ENCODE measurements at regions of chr4 and their contacts with region 1.

Region 1: DNA sequence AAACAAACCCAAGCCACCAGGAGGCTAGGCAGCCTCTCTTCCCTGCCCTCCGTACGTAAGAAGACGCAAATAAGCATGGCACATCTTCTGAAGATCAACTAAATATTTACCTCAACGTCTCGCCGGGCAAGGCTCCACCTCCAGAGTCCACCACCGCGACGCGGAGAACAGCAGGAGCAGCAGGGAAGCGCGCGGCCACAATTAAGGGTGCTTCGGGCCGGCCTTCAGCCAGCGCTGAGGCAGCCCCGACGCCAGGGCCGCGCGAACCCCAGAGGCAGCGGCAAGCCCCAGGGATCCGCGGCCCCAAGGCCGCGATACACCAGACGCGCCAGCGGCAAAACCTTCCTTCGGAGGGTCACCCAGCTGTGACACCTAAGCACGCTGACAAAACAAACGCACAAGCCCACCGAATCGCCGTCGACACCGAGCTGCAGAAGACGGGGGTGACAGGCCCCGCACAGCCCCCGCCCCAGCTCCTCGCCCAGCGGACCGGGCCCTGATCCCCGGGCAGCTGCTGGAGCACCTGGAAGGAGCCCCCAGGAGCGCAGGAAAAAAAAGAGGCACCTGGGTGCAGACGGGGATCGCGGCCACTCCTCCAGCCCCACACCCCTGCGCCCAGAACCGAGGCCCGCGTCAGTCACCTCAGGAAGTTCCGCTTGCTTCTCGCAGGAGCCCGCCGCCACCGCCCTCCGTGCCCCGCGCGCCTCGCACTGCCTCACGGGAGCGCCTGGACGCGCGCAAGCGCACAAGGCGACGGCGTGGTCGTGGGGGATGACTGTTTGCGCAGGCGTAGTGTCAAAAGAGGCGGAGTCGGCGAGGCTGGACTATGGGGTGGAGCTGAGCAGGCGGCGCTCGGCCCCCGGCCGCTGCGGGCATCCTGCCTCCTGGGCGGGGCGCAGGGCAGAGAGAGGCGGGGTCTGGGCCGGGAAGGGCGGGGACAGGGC is at the starts of genes HAUS3 and POLN:
- DNase-seq: peak; percentile 100
- ATAC-seq: peak; percentile 97
- H3K4me3 ChIP-seq: peak within 1 kb of the TSS; percentile 66 to 88 (median 76)
- H3K4me3 Mint-ChIP-seq: peak within 1 kb of the TSS; percentile 95
- H3K27ac ChIP-seq: peak within 1 kb of the TSS; percentile 53 to 89
- H3K27ac Mint-ChIP-seq: peak within 1 kb of the TSS; percentile 95
- H3K4me1 ChIP-seq: peaks cover 34 to 45% of the 10 kb centered on the region in 2 donors
- H3K4me1 Mint-ChIP-seq: peaks cover 59% of the 10 kb centered on the region
- H3K27me3 ChIP-seq: no peaks in the 10 kb centered on the region
- H3K27me3 Mint-ChIP-seq: no peaks in the 10 kb centered on the region
- CTCF ChIP-seq: peak; percentile 23
- total RNA-seq, gene HAUS3: 24.2 and 26.5 TPM in 2 replicates
- total RNA-seq, gene POLN: 1.5 and 4.2 TPM in 2 replicates

Region 2: DNA sequence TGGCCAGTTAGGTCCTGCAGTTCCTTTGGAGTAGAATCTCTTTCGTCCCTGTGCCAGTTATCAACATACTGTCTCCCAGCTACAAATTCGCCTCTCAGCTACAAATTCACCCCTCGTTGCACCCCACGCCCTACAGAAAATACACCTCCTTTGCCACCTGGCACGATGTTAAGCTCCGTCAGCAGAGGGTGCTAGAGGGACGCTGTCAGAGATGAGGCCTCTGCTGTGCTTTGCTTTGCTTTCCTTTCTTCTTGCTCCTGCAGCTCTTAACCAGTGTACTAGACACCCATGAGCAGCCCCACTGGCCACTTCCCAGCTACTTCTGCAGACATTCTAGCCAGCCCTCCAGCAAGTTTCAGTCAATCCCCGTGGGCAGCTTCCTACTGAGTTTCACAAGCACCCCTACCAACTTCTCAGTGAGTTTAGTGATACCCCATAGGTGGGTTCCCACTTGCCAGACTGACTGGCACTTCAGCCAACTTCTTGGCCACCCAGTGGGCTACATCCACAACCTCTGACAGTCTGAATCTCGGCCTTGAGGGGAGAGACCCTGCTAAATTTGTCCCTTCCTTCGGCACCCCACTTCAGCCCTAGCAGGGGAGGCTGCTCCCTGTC is 21.6 kb before region 1 on chr4:
- CTCF ChIA-PET with region 1: interaction called, 51 read pairs
- POLR2A ChIA-PET with region 1: interaction called, 3 read pairs
- intact Hi-C with region 1: loop called (anchors 1 kb)
- DNase-seq: peak; percentile 82
- ATAC-seq: peak; percentile 90
- H3K4me3 ChIP-seq: no peak overlapping the region
- H3K4me3 Mint-ChIP-seq: no peak overlapping the region
- H3K27ac ChIP-seq: no peak overlapping the region
- H3K27ac Mint-ChIP-seq: peak overlapping the region; percentile 26
- H3K4me1 ChIP-seq: peaks cover 0 to 5% of the 10 kb centered on the region in 2 donors
- H3K4me1 Mint-ChIP-seq: peaks cover 4% of the 10 kb centered on the region
- H3K27me3 ChIP-seq: no peaks in the 10 kb centered on the region
- H3K27me3 Mint-ChIP-seq: no peaks in the 10 kb centered on the region
- CTCF ChIP-seq: peak; percentile 88

Region 3: DNA sequence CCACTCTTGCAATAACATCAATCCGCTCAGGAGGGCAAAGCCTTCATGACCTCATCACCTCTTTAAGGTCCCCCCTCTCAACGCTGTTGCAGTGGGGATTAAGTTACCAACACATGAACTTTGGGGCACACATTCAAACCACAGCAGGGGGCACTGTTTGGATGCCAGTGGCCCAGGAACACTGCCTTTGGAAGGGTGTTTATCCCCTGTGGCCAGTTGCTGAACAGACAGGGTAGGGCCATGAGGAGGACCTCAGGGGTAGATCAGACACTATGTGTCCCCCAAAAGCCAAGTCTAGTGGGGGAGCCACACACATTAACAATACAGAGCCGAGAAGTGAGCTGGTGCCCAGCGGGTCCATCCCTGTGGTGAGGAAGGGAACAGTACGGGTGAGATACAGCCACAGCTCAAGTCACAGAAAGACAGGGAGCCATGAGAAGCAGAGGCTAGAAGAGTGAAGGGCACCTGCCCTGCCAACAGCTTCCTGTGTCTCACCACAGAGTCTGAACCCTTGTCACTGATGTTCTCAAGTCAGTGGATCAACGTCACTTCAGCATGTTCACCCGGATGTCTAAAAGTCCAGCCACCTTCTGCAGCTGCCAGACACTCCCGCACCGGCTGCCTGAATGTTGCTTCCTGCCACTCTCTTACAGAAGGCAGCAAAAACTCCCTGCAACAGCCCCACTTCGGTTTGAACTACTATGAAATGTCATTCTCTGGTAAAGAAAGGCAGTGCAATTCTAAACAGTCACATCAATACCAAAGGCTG is 40.1 kb after region 1 on chr4:
- CTCF ChIA-PET with region 1: no interaction called
- POLR2A ChIA-PET with region 1: no interaction called
- intact Hi-C with region 1: loop called (anchors 1 kb)
- DNase-seq: peak; percentile 90
- ATAC-seq: peak; percentile 92
- H3K4me3 ChIP-seq: no peak overlapping the region
- H3K4me3 Mint-ChIP-seq: peak overlapping the region; percentile 87
- H3K27ac ChIP-seq: peak overlapping the region; percentile 54 to 83
- H3K27ac Mint-ChIP-seq: peak overlapping the region; percentile 99
- H3K4me1 ChIP-seq: peaks cover 18 to 21% of the 10 kb centered on the region in 2 donors
- H3K4me1 Mint-ChIP-seq: peaks cover 33% of the 10 kb centered on the region
- H3K27me3 ChIP-seq: no peaks in the 10 kb centered on the region
- H3K27me3 Mint-ChIP-seq: no peaks in the 10 kb centered on the region
- CTCF ChIP-seq: peak; percentile 76

Region 4: DNA sequence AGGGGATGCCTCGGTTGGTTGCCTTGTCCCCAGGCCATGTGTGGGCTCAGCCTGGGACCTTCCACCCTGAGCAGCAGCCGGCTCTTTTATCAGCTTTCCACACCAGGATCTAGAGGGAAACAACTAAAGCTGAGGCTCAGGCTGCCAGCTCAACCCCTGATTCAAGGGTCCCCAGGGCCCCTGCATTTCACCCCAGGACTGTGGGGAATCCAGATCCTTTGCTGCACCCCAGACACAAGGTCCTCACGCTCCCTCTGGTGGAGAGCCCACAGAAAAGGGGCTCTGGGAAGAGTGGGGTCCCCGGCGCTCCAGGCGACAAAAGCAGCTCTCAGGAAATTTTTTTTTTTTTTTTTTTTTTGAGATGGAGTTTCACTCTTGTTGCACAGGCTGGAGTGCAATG is 112.4 kb after region 1 on chr4:
- CTCF ChIA-PET with region 1: interaction called, 4 read pairs
- POLR2A ChIA-PET with region 1: no interaction called
- intact Hi-C with region 1: loop called (anchors 1 kb)
- DNase-seq: peak; percentile 32
- ATAC-seq: peak; percentile 37
- H3K4me3 ChIP-seq: no peak overlapping the region
- H3K4me3 Mint-ChIP-seq: no peak overlapping the region
- H3K27ac ChIP-seq: no peak overlapping the region
- H3K27ac Mint-ChIP-seq: peak overlapping the region; percentile 32
- H3K4me1 ChIP-seq: peaks cover 11 to 13% of the 10 kb centered on the region in 2 donors
- H3K4me1 Mint-ChIP-seq: peaks cover 15% of the 10 kb centered on the region
- H3K27me3 ChIP-seq: no peaks in the 10 kb centered on the region
- H3K27me3 Mint-ChIP-seq: no peaks in the 10 kb centered on the region
- CTCF ChIP-seq: peak; percentile 42

Region 5: GRCh38 chr4:2441393-2442174 is 199.9 kb after region 1 on chr4:
- CTCF ChIA-PET with region 1: interaction called, 8 read pairs
- POLR2A ChIA-PET with region 1: interaction called, 10 read pairs
- intact Hi-C with region 1: no loop called
- DNase-seq: peak; percentile 78
- ATAC-seq: peak; percentile 98
- H3K4me3 ChIP-seq: no peak overlapping the region
- H3K4me3 Mint-ChIP-seq: no peak overlapping the region
- H3K27ac ChIP-seq: no peak overlapping the region
- H3K27ac Mint-ChIP-seq: no peak overlapping the region
- H3K4me1 ChIP-seq: peaks cover 0 to 7% of the 10 kb centered on the region in 2 donors
- H3K4me1 Mint-ChIP-seq: peaks cover 5% of the 10 kb centered on the region
- H3K27me3 ChIP-seq: no peaks in the 10 kb centered on the region
- H3K27me3 Mint-ChIP-seq: no peaks in the 10 kb centered on the region
- CTCF ChIP-seq: peak; percentile 87

Region 6: GRCh38 chr4:2468445-2469192 is 226.9 kb after region 1 on chr4 and contains the start of gene RNF4:
- CTCF ChIA-PET with region 1: interaction called, 4 read pairs
- POLR2A ChIA-PET with region 1: no interaction called
- intact Hi-C with region 1: loop called (anchors 1 kb)
- DNase-seq: peak; percentile 96
- ATAC-seq: peak; percentile 85
- H3K4me3 ChIP-seq: peak within 1 kb of the TSS; percentile 77 to 99 (median 90)
- H3K4me3 Mint-ChIP-seq: peak within 1 kb of the TSS; percentile 99
- H3K27ac ChIP-seq: peak within 1 kb of the TSS; percentile 90 to 97
- H3K27ac Mint-ChIP-seq: peak within 1 kb of the TSS; percentile 99
- H3K4me1 ChIP-seq: peaks cover 31 to 33% of the 10 kb centered on the region in 2 donors
- H3K4me1 Mint-ChIP-seq: peaks cover 45% of the 10 kb centered on the region
- H3K27me3 ChIP-seq: no peaks in the 10 kb centered on the region
- H3K27me3 Mint-ChIP-seq: no peaks in the 10 kb centered on the region
- CTCF ChIP-seq: no peak
- total RNA-seq, gene RNF4: 95.2 and 104 TPM in 2 replicates